Caco-2 (cell line): ENCODE measurements at regions of chr11 and their contacts with region 1.

Region 1: GRCh38 chr11:104254347-104254746 is 90.4 kb upstream of the PDGFD start:
- DNase-seq: peak; percentile 59 to 67
- H3K4me3 ChIP-seq: no peak overlapping the region
- H3K4me3 Mint-ChIP-seq: no peak overlapping the region
- H3K27ac Mint-ChIP-seq: no peak overlapping the region
- H3K4me1 ChIP-seq: peaks cover 6% of the 10 kb centered on the region
- H3K4me1 Mint-ChIP-seq: peaks cover 16% of the 10 kb centered on the region
- H3K27me3 ChIP-seq: no peaks in the 10 kb centered on the region
- H3K27me3 Mint-ChIP-seq: no peaks in the 10 kb centered on the region
- CTCF ChIP-seq: peak; percentile 63 to 73

Region 2: DNA sequence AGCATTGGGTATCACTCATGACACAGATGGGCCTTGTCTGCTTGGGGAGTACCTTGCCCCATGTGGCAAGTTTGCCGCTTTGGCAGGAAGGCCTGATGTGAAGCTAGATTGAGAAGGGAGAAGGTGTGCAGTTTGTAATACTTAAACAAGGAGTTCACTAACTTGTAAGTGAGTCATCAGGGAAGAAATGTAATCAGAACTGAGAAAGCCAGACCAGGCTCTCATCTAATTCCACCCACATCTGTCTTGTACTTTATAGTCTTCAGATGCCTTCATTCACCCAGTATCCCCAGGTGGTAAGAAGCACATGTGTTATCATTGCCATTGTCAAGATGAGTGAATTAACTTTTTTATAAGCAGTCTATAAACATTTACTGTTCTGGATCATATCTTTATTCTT is 333.9 kb before region 1 on chr11:
- CTCF ChIA-PET with region 1: no interaction called
- POLR2A ChIA-PET with region 1: no interaction called
- intact Hi-C with region 1: loop called (anchors 5 kb)
- DNase-seq: no peak
- H3K4me3 ChIP-seq: no peak overlapping the region
- H3K4me3 Mint-ChIP-seq: no peak overlapping the region
- H3K27ac Mint-ChIP-seq: no peak overlapping the region
- H3K4me1 ChIP-seq: peaks cover 49% of the 10 kb centered on the region
- H3K4me1 Mint-ChIP-seq: peaks cover 33% of the 10 kb centered on the region
- H3K27me3 ChIP-seq: no peaks in the 10 kb centered on the region
- H3K27me3 Mint-ChIP-seq: peaks cover 4% of the 10 kb centered on the region
- CTCF ChIP-seq: no peak